ENCODE measurements at regions of chr22 and their contacts with region 1.

Region 1: GRCh38 chr22:38981992-38982927 is at the start of gene APOBEC3B:
- DNase-seq: peak; percentile 83 to 90
- ATAC-seq: peak; percentile 97
- H3K4me3 ChIP-seq: peak within 1 kb of the TSS; percentile 2 to 19
- H3K27ac ChIP-seq: no peak within 1 kb of the TSS
- H3K4me1 ChIP-seq: no peaks in the 10 kb centered on the region
- H3K27me3 ChIP-seq: no peaks in the 10 kb centered on the region
- total RNA-seq, gene APOBEC3B: 1.4 TPM in 1 of 2 donors, not detected in the other

Region 2: GRCh38 chr22:38774496-38775166 is 207.6 kb before region 1 on chr22:
- intact Hi-C with region 1: no loop called
- DNase-seq: no peak
- ATAC-seq: no peak
- H3K4me3 ChIP-seq: no peak overlapping the region
- H3K27ac ChIP-seq: no peak overlapping the region
- H3K4me1 ChIP-seq: no peaks in the 10 kb centered on the region
- H3K27me3 ChIP-seq: no peaks in the 10 kb centered on the region

Region 3: GRCh38 chr22:38862375-38863329 is 119.6 kb before region 1 on chr22:
- intact Hi-C with region 1: loop called in 1 of 2 experiments (anchors 5 kb)
- DNase-seq: peak; percentile 83 to 90
- ATAC-seq: peak; percentile 62
- H3K4me3 ChIP-seq: no peak overlapping the region
- H3K27ac ChIP-seq: peak overlapping the region in 1 of 2 donors; percentile 7
- H3K4me1 ChIP-seq: peaks cover 0 to 3% of the 10 kb centered on the region in 2 donors
- H3K27me3 ChIP-seq: no peaks in the 10 kb centered on the region

Region 4: DNA sequence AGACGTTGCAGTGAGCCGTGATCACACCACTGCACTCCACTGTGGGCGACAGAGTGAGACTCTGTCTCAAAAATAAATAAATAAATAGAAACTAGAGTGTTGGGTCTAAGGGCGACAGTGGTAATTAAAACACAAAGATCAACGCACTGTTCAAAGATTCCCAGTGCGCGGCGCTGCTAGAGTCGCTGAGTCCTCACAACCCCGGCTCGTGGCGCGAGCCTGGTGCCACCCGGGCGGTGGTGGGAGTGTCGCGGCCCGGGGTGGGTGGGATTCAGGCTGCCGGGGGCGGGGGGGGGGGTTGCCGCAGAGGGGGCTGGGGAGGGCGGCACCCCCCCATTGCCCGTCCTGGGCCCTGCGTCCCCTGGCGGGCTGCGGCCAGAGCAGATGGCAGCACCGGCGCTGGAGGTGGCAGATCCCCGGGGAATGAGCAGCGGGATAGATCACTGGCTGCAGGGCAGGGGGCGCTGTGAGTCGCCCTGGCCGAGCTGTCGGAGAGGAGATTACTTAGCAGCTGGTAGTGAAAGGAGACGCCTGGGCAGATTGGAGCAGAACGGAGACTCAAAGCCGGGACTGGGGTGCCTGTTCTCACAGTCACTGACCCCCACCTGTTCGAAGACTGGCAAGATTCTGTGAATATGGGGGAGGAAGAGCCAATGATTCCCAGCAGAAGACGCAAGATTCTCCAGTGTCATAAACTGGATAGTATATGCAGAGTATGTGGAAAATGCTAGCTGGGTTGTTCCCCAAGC is 55.1 kb before region 1 on chr22:
- intact Hi-C with region 1: no loop called
- DNase-seq: peak; percentile 87 to 92
- ATAC-seq: peak; percentile 69
- H3K4me3 ChIP-seq: peak overlapping the region in 1 of 2 donors; percentile 36
- H3K27ac ChIP-seq: peak overlapping the region in 1 of 2 donors; percentile 21
- H3K4me1 ChIP-seq: no peaks in the 10 kb centered on the region
- H3K27me3 ChIP-seq: no peaks in the 10 kb centered on the region

Region 5: GRCh38 chr22:38941488-38941987 is 40.7 kb before region 1 on chr22:
- intact Hi-C with region 1: no loop called
- DNase-seq: peak in 1 of 2 donors; percentile 69
- ATAC-seq: no peak
- H3K4me3 ChIP-seq: no peak overlapping the region
- H3K27ac ChIP-seq: no peak overlapping the region
- H3K4me1 ChIP-seq: no peaks in the 10 kb centered on the region
- H3K27me3 ChIP-seq: no peaks in the 10 kb centered on the region